ENCODE measurements at regions of chr11 and their contacts with region 1.

Region 1: DNA sequence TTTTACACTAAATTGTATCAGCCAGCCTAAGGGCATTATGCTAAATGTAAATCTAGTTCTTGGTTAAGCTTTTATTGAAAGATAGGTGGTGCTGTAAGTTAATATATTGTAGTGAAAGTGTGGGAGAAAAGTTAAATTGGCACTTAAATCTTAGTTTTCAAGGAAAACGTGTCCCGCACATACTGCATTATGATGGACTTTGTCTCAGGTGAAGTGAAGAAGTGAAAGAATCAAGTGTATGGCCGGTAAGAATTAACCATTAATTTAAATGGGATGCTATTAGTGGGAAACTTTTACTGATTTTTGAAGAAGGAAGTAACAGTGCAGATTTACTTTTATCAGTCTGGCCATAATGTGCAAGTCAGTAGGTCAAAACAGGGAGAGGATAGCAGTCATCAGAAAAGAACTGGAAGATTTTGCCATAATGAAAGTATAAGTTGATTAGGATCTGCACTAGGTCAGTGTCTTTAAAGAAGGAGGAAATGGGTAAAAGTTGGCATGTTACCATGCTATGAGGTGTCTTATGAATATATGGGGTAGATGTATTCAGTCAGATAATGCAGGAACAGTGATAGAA is 81.6 kb downstream of the PDHX start:
- DNase-seq: no peak
- ATAC-seq: no peak

Region 2: DNA sequence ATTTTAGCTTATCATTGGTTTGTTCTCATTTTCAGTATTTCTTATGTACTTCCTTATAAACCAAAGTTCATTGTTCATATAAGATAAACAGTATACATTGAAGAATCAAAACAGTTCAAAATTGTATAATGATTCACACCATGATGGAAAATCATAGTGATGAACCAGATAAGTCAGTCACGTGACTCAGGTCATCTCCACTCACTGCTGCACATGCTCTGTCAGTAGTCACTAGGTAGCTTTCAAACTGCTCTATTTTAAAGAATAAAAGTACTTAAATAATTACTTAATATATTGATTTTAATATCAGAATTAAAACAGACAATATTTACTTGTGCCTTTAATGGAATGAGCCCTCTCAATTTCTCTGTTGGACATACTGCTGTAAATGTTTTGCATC is 44.1 kb before region 1 on chr11:
- intact Hi-C with region 1: no loop called
- DNase-seq: no peak
- ATAC-seq: no peak

Region 3: GRCh38 chr11:35321532-35322359 is 323.7 kb after region 1 on chr11:
- intact Hi-C with region 1: loop called (anchors 10 kb)
- DNase-seq: no peak
- ATAC-seq: peak; percentile 32